ENCODE measurements at regions of chr14 and their contacts with region 1.

Region 1: DNA sequence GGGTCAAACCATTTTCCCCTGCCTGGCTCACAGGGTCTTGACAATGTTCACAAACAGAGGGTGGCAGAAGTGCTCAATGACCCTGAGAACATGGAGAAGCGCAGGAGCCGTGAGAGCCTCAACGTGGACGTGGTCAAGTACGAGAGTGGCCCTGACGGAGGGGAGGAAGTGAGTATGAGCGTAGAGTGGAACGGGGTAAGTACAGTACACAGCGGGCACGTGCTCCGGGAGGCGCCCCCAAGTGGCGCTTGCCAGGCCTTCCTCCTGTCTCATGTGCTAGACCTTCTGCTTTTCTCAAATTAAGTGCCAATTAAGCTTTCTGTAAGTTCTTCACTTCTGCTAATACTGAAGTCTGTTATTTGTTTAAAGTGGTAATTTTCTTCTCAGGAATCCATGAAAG is 35.9 kb downstream of the XRCC3 start:
- DNase-seq: peak; percentile 6
- ATAC-seq: peak; percentile 90
- H3K4me3 ChIP-seq: no peak overlapping the region
- H3K27ac ChIP-seq: no peak overlapping the region
- H3K4me1 ChIP-seq: no peaks in the 10 kb centered on the region
- H3K27me3 ChIP-seq: no peaks in the 10 kb centered on the region
- CTCF ChIP-seq: peak; percentile 58
- EP300 ChIP-seq: no peak
- POLR2A ChIP-seq: no peak
- RAD21 ChIP-seq: no peak

Region 2: DNA sequence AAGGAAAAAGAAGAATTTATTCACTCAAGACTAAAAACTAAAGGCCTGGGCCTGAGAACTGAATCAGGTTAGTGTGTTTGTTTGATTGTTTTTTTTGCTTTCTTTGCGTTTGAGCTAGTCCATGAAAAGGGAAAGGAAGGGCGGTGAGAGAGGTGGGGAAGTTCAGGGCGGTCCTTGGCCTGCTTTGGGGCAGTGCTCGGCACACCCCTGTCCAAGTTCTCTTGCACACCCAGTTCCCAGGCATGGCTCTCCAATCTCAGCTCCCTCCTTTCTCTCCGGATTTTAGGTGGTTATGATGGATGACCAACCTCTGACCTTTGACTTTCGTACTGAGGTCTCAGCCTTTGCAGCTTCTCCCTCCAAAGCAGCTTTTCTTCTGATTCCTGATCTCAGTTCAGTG is 105.2 kb before region 1 on chr14:
- CTCF ChIA-PET with region 1: interaction called, 4 read pairs
- POLR2A ChIA-PET with region 1: no interaction called
- in situ Hi-C with region 1: no loop called
- intact Hi-C with region 1: loop called (anchors 5 kb)
- DNase-seq: no peak
- ATAC-seq: no peak
- H3K4me3 ChIP-seq: no peak overlapping the region
- H3K27ac ChIP-seq: no peak overlapping the region
- H3K4me1 ChIP-seq: no peaks in the 10 kb centered on the region
- H3K27me3 ChIP-seq: no peaks in the 10 kb centered on the region
- CTCF ChIP-seq: no peak
- EP300 ChIP-seq: no peak
- POLR2A ChIP-seq: no peak
- RAD21 ChIP-seq: no peak

Region 3: DNA sequence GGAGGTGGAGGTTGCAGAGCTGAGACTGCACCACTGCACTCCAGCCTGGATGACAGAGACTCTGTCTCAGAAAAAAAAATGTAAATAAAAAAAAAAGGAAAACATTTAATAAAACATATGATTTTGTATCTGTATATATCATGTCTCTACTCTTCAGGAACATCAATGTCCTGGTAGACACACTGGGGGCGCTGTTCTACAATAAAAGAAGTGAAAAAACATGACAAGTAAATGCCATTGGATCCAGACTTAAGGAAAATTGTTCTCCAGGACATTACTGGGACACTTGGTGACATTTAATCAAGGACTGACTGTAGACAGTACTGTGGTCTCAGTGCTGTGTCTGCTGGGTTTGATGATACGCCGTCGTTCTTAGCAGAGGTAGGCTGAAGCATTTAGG is 65.8 kb before region 1 on chr14:
- CTCF ChIA-PET with region 1: interaction called, 7 read pairs
- POLR2A ChIA-PET with region 1: no interaction called
- in situ Hi-C with region 1: loop called (anchors 5 kb)
- intact Hi-C with region 1: loop called (anchors 1 kb)
- DNase-seq: peak; percentile 54
- ATAC-seq: peak; percentile 36; the same call in 2 of the 3 replicates
- H3K4me3 ChIP-seq: no peak overlapping the region
- H3K27ac ChIP-seq: no peak overlapping the region
- H3K4me1 ChIP-seq: peaks cover 14% of the 10 kb centered on the region; the same call in 1 of the 2 replicates
- H3K27me3 ChIP-seq: peaks cover 0 to 2% of the 10 kb centered on the region in 2 experiments; a peak in 4 of 5 replicates
- CTCF ChIP-seq: peak; percentile 59
- EP300 ChIP-seq: no peak
- POLR2A ChIP-seq: no peak
- RAD21 ChIP-seq: 0 out of 2 replicates have a peak, but pooled peaks have one; percentile 40

Measured in HepG2 (cell line).